ENCODE measurements at regions of chr14 and their contacts with region 1.

Region 1: GRCh38 chr14:25132732-25133422 is 82.9 kb upstream of the STXBP6 start:
- DNase-seq: peak; percentile 53
- H3K4me3 ChIP-seq: no peak overlapping the region
- H3K27ac ChIP-seq: no peak overlapping the region
- H3K4me1 ChIP-seq: no peaks in the 10 kb centered on the region
- H3K27me3 ChIP-seq: no peaks in the 10 kb centered on the region
- CTCF ChIP-seq: peak; percentile 51 to 76

Region 2: GRCh38 chr14:25026476-25027137 is 106.3 kb before region 1 on chr14:
- CTCF ChIA-PET with region 1: no interaction called
- dilution Hi-C with region 1: no loop called
- in situ Hi-C with region 1: no loop called
- intact Hi-C with region 1: loop called (anchors 1 kb)
- DNase-seq: no peak
- H3K4me3 ChIP-seq: no peak overlapping the region
- H3K27ac ChIP-seq: no peak overlapping the region
- H3K4me1 ChIP-seq: no peaks in the 10 kb centered on the region
- H3K27me3 ChIP-seq: no peaks in the 10 kb centered on the region
- CTCF ChIP-seq: no peak

Region 3: GRCh38 chr14:25049568-25050268 is 83.2 kb before region 1 on chr14 and contains the start of gene STXBP6:
- CTCF ChIA-PET with region 1: no interaction called
- dilution Hi-C with region 1: no loop called
- in situ Hi-C with region 1: no loop called
- intact Hi-C with region 1: loop called (anchors 10 kb)
- DNase-seq: peak; percentile 62
- H3K4me3 ChIP-seq: peak within 1 kb of the TSS in 2 of 3 experiments; percentile 7 to 39
- H3K27ac ChIP-seq: no peak within 1 kb of the TSS
- H3K4me1 ChIP-seq: peaks cover 5% of the 10 kb centered on the region
- H3K27me3 ChIP-seq: peaks cover 11% of the 10 kb centered on the region
- CTCF ChIP-seq: no peak
- total RNA-seq, gene STXBP6: 0.17 to 0.35 TPM

Measured in mammary epithelial cell (primary cell).